Activated naive CD4-positive, alpha-beta T cell treated with anti-CD3 and anti-CD28 coated beads for 36 hours (primary cell): ENCODE measurements at regions of chr17 and their contacts with region 1.

Region 1: DNA sequence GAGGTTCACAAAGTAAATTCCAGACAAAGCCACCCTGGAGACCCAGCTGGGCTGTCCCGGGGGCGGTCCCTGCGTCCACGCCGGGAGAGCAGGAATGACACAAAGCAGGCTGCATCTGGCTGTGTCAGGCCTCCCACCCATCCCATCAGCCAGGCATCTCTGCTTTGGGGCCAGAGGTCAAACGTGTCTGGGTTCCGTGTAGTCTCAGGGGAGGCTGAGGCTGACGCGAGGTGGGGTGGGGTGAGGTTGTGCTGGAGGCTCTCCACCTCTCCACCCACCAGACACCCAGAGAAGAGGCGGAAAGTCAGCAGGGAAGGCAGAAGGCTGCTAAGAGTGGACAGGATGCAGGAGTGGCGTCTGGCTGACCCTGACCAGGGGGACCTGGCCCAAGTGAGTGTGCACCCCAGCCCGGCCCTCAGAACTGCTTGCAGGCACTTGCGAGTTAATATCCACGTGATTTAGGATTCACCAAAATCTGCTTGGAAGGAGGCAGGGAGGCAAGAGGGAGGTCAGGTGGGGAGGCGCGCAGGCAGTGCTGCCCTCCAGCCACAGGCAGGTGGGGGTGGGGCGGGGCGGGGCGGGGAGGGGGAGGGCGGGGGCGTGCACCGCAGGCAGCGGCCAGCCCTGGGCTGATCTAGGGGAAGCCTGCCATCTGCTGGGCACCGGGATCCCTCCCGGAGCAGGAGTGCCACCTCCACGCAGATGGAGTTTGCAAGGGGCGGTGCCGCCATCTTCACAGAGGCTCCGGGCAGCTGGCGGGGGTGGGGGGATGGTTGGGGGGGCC is 44.3 kb downstream of the TBC1D16 start:
- DNase-seq: peak; percentile 95
- H3K4me3 Mint-ChIP-seq: peak overlapping the region; percentile 86
- H3K27ac Mint-ChIP-seq: no peak overlapping the region
- H3K4me1 Mint-ChIP-seq: peaks cover 40% of the 10 kb centered on the region
- H3K27me3 Mint-ChIP-seq: no peaks in the 10 kb centered on the region

Region 2: GRCh38 chr17:78774956-78775571 is 1216.3 kb before region 1 on chr17:
- CTCF ChIA-PET with region 1: no interaction called
- intact Hi-C with region 1: loop called (anchors 10 kb)
- DNase-seq: peak; percentile 86
- H3K4me3 Mint-ChIP-seq: peak overlapping the region; percentile 82
- H3K27ac Mint-ChIP-seq: peak overlapping the region; percentile 97
- H3K4me1 Mint-ChIP-seq: peaks cover 65% of the 10 kb centered on the region
- H3K27me3 Mint-ChIP-seq: no peaks in the 10 kb centered on the region

Region 3: GRCh38 chr17:79803997-79804855 is 187.1 kb before region 1 on chr17:
- CTCF ChIA-PET with region 1: interaction called, 3 read pairs
- intact Hi-C with region 1: loop called (anchors 1 kb)
- DNase-seq: peak; percentile 94
- H3K4me3 Mint-ChIP-seq: peak overlapping the region; percentile 67
- H3K27ac Mint-ChIP-seq: peak overlapping the region; percentile 74
- H3K4me1 Mint-ChIP-seq: peaks cover 44% of the 10 kb centered on the region
- H3K27me3 Mint-ChIP-seq: peaks cover 85% of the 10 kb centered on the region

Region 4: DNA sequence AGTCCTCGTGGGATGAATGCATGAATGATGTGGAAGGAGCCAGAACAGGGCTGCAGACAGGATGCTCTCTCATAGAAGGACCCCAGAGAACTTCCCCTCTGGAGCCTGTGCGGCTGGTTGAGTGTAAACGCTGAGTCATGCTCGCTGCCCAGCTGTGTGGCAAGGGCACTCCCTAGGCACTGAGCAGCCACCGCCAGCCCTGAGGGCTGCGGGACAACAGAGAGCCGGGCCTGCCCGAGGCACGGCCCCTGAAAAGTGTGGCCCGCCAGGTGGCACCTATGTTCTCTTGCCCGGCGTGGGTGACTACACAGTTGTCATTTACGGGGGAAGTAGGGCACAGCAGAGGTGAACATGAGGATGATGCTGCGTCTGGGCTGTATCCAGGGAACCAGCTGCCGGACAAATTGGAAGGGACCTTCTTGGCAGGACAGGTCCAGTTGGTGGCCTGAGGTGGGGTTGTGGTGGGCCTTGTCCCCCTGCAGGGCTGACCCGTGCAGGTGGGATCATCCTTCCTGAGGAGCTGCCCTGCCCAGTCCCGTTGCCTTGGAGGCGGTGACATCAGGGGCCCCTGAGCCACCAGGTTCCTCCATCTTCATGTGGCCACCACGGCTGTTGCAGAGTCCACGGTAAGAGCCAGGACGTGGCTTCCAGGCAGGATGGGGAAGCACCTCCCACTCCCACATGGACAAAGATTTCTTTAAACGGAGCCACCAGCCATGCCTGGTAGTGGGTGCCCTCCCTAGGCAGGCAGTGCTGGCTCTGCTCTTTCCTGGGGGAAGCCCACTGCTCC is 57.3 kb before region 1 on chr17:
- CTCF ChIA-PET with region 1: interaction called, 4 read pairs
- intact Hi-C with region 1: loop called (anchors 1 kb)
- DNase-seq: peak; percentile 46
- H3K4me3 Mint-ChIP-seq: no peak overlapping the region
- H3K27ac Mint-ChIP-seq: no peak overlapping the region
- H3K4me1 Mint-ChIP-seq: peaks cover 46% of the 10 kb centered on the region
- H3K27me3 Mint-ChIP-seq: peaks cover 15% of the 10 kb centered on the region

Region 5: GRCh38 chr17:80008383-80008840 is 17.1 kb after region 1 on chr17:
- CTCF ChIA-PET with region 1: interaction called, 45 read pairs
- intact Hi-C with region 1: no loop called
- DNase-seq: peak; percentile 86
- H3K4me3 Mint-ChIP-seq: no peak overlapping the region
- H3K27ac Mint-ChIP-seq: no peak overlapping the region
- H3K4me1 Mint-ChIP-seq: peaks cover 6% of the 10 kb centered on the region
- H3K27me3 Mint-ChIP-seq: no peaks in the 10 kb centered on the region

Region 6: GRCh38 chr17:80474231-80474960 is 483.1 kb after region 1 on chr17:
- CTCF ChIA-PET with region 1: no interaction called
- intact Hi-C with region 1: no loop called
- DNase-seq: peak; percentile 57
- H3K4me3 Mint-ChIP-seq: peak overlapping the region; percentile 71
- H3K27ac Mint-ChIP-seq: no peak overlapping the region
- H3K4me1 Mint-ChIP-seq: peaks cover 22% of the 10 kb centered on the region
- H3K27me3 Mint-ChIP-seq: peaks cover 34% of the 10 kb centered on the region